A549 (cell line): ENCODE measurements at regions of chrX and their contacts with region 1.

Region 1: GRCh38 chrX:23901805-23902204 is 5.9 kb downstream of the APOO start:
- DNase-seq: peak; percentile 62 to 92
- ATAC-seq: peak; percentile 83 to 84
- H3K4me3 ChIP-seq: peak overlapping the region; percentile 22; the same call in 2 of the 3 replicates
- H3K27ac ChIP-seq: peak overlapping the region; percentile 91 to 95
- H3K4me1 ChIP-seq: peaks cover 66% of the 10 kb centered on the region
- CTCF ChIP-seq: peak; percentile 67
- EP300 ChIP-seq: no peak
- POLR2A ChIP-seq: no peak
- RAD21 ChIP-seq: peak; percentile 90 to 92

Region 2: GRCh38 chrX:23673108-23673507 is 228.7 kb before region 1 on chrX:
- CTCF ChIA-PET with region 1: interaction called, 10 read pairs
- POLR2A ChIA-PET with region 1: no interaction called
- DNase-seq: no peak
- ATAC-seq: no peak
- H3K4me3 ChIP-seq: no peak overlapping the region
- H3K27ac ChIP-seq: no peak overlapping the region
- H3K4me1 ChIP-seq: no peaks in the 10 kb centered on the region; the same call in 2 of the 3 replicates
- CTCF ChIP-seq: no peak
- EP300 ChIP-seq: no peak
- POLR2A ChIP-seq: no peak
- RAD21 ChIP-seq: no peak

Region 3: GRCh38 chrX:23737413-23737812 is 164.4 kb before region 1 on chrX:
- CTCF ChIA-PET with region 1: interaction called, 35 read pairs
- POLR2A ChIA-PET with region 1: interaction called, 22 read pairs
- DNase-seq: no peak
- ATAC-seq: no peak
- H3K4me3 ChIP-seq: no peak overlapping the region
- H3K27ac ChIP-seq: no peak overlapping the region
- H3K4me1 ChIP-seq: peaks cover 19% of the 10 kb centered on the region
- CTCF ChIP-seq: no peak
- EP300 ChIP-seq: no peak
- POLR2A ChIP-seq: no peak
- RAD21 ChIP-seq: no peak

Region 4: GRCh38 chrX:23756157-23756559 is 145.6 kb before region 1 on chrX:
- CTCF ChIA-PET with region 1: interaction called, 30 read pairs
- POLR2A ChIA-PET with region 1: no interaction called
- DNase-seq: peak; percentile 41 to 73
- ATAC-seq: peak in 1 of 2 experiments; percentile 76; a peak in 3 of 6 replicates
- H3K4me3 ChIP-seq: no peak overlapping the region
- H3K27ac ChIP-seq: peak overlapping the region; percentile 25 to 61; a peak in 2 of 6 replicates
- H3K4me1 ChIP-seq: peaks cover 24% of the 10 kb centered on the region; the same call in 2 of the 3 replicates
- CTCF ChIP-seq: peak; percentile 66
- EP300 ChIP-seq: no peak
- POLR2A ChIP-seq: no peak
- RAD21 ChIP-seq: peak; percentile 52 to 56; a peak in 4 of 5 replicates

Region 5: GRCh38 chrX:23788521-23788920 is 113.3 kb before region 1 on chrX:
- CTCF ChIA-PET with region 1: interaction called, 122 read pairs
- POLR2A ChIA-PET with region 1: interaction called, 218 read pairs
- DNase-seq: peak in 1 of 2 experiments; percentile 58
- ATAC-seq: peak; percentile 19 to 33; a peak in 4 of 6 replicates
- H3K4me3 ChIP-seq: no peak overlapping the region
- H3K27ac ChIP-seq: peak overlapping the region; percentile 80 to 84
- H3K4me1 ChIP-seq: peaks cover 23% of the 10 kb centered on the region; the same call in 2 of the 3 replicates
- CTCF ChIP-seq: no peak
- EP300 ChIP-seq: no peak
- POLR2A ChIP-seq: no peak
- RAD21 ChIP-seq: no peak

Region 6: GRCh38 chrX:23813808-23814207 is 88.0 kb before region 1 on chrX:
- CTCF ChIA-PET with region 1: interaction called, 24 read pairs
- POLR2A ChIA-PET with region 1: no interaction called
- DNase-seq: no peak
- ATAC-seq: no peak
- H3K4me3 ChIP-seq: no peak overlapping the region
- H3K27ac ChIP-seq: peak overlapping the region in 1 of 2 experiments; percentile 61; a peak in 2 of 6 replicates
- H3K4me1 ChIP-seq: peaks cover 17% of the 10 kb centered on the region; the same call in 2 of the 3 replicates
- CTCF ChIP-seq: no peak
- EP300 ChIP-seq: no peak
- POLR2A ChIP-seq: no peak
- RAD21 ChIP-seq: no peak

Region 7: DNA sequence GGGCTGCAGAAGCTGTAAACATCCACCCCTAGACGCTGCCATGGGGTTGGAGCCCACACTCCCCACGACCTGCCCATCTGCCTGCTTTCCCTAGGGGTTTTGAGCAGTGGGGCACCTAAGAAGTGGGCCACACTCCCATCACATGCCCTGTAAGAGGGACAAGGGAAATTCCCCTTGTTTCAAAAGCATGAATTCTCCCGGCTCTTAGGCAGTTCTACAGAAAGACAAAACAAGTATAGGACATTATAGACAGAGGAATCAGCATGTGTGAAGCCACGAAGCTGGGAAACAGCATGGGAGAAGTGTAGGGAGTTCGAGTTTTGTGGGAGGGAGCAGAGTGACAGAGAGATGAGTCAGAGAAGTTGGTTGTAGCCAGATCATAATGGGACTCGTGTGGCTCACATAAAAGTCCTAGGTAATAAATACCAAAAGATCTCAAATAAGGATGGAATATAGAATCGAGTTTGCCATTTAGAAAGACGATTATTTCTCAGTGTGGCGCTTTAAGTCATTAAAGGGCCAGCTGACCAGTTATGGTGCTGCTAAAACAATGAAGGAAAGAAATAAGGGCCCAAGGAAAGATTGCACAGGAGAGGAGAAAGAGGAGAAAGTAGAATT is 18.0 kb before region 1 on chrX:
- CTCF ChIA-PET with region 1: interaction called, 32 read pairs
- POLR2A ChIA-PET with region 1: interaction called, 12 read pairs
- DNase-seq: peak; percentile 76 to 79
- ATAC-seq: peak; percentile 87 to 93
- H3K4me3 ChIP-seq: no peak overlapping the region
- H3K27ac ChIP-seq: peak overlapping the region; percentile 88 to 97
- H3K4me1 ChIP-seq: peaks cover 76% of the 10 kb centered on the region
- CTCF ChIP-seq: no peak
- EP300 ChIP-seq: no peak
- POLR2A ChIP-seq: no peak
- RAD21 ChIP-seq: no peak